Activated CD8-positive, alpha-beta memory T cell treated with anti-CD3 and anti-CD28 coated beads, Interleukin-2, amount 10 ng/mL, durations not matched to agents 7 days and 5 days (primary cell): ENCODE measurements at regions of chr9 and their contacts with region 1.

Region 1: GRCh38 chr9:98848450-98849149 is 41.1 kb downstream of the GALNT12 start:
- DNase-seq: peak; percentile 86
- ATAC-seq: peak; percentile 94
- H3K4me3 Mint-ChIP-seq: no peak overlapping the region
- H3K27ac Mint-ChIP-seq: no peak overlapping the region
- H3K4me1 Mint-ChIP-seq: peaks cover 15% of the 10 kb centered on the region
- H3K27me3 Mint-ChIP-seq: no peaks in the 10 kb centered on the region

Region 2: DNA sequence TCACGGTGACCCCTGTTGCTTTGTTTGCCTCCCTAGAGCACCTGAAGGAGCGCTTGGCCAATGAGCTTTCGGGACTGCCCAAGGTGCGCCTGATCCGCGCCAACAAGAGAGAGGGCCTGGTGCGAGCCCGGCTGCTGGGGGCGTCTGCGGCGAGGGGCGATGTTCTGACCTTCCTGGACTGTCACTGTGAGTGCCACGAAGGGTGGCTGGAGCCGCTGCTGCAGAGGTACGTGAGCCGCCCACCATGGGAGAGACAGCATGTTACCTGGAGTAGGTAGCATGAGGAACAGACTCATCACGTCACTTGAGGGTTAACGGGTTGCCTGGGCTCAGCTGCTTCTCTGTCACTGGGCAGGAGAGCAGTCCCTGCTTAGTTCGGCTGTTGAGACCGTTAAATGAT is 21.9 kb before region 1 on chr9:
- CTCF ChIA-PET with region 1: interaction called, 11 read pairs
- DNase-seq: no peak
- ATAC-seq: no peak
- H3K4me3 Mint-ChIP-seq: no peak overlapping the region
- H3K27ac Mint-ChIP-seq: no peak overlapping the region
- H3K4me1 Mint-ChIP-seq: peaks cover under 1% of the 10 kb centered on the region
- H3K27me3 Mint-ChIP-seq: no peaks in the 10 kb centered on the region

Region 3: DNA sequence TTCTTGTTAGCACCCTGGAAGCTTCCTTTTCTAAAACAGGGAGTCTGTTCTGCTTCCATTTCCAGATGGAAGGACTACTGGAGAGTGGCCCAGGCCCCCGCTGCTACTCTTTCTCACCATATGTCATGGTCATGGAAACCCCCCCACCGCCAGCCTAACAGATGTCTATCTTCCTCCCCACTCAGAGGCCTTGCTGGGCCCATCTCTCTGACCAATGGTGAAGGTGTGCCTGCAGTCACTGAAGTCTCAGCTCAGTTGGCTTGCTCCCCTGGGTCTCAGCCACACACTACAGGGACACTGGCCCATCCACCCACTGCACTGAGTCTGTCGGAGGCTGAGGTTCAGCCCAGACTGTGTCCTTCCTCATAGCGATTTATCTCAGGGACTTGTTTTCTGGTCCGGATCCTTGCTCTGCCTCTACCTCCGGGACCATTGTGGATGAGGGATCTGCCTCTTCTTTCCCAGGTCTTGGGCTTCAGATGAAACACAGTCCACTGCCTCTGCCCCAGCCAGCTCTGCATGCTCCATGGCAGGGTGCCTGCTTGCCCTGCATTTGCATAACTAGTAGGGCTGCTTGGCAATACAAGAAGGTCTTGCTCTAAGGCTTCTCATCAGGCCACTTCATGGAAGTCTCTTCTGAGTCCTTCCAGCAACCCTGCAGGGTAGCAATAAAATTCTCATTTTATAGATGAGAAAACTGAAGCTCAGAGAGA is 10.3 kb before region 1 on chr9:
- CTCF ChIA-PET with region 1: interaction called, 14 read pairs
- DNase-seq: no peak
- ATAC-seq: no peak
- H3K4me3 Mint-ChIP-seq: no peak overlapping the region
- H3K27ac Mint-ChIP-seq: no peak overlapping the region
- H3K4me1 Mint-ChIP-seq: no peaks in the 10 kb centered on the region
- H3K27me3 Mint-ChIP-seq: no peaks in the 10 kb centered on the region

Region 4: DNA sequence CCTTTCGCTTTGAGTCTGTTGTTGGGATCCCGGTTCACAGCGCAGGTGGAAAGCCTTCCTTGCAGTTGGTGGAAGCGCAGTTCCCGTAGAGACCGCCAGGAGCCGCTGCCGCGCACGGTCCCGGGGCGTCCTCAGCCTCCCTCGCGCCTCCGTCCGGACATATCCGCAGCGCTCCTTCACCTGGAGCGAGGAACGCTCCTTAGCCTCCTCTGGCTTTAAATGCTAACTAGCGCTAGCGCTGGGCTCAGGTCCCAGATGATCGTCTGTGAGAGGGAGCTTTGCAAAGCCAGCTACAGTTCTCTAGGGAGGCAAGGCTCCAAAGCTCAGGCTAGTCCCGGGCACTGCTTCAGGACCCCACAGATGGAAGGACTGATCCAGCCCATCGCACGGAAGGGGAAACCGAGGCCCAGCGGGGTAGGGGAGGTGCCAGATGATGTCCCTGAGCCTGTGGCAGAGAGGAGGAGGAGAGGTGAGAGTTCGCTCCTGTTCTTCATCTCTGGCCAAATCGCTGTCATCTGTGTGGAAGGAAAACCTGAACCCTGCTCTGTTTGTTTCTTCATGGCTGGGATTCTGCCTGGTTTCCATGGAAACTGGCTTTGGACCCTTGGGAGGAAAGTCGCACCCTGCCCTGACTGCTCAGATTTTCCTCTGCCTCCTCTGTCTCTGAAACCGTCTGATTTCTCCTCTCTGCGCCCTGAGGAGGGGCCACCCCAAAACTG is 126.6 kb after region 1 on chr9:
- CTCF ChIA-PET with region 1: interaction called, 22 read pairs
- DNase-seq: peak; percentile 86
- ATAC-seq: peak; percentile 94
- H3K4me3 Mint-ChIP-seq: peak overlapping the region; percentile 25
- H3K27ac Mint-ChIP-seq: no peak overlapping the region
- H3K4me1 Mint-ChIP-seq: peaks cover 11% of the 10 kb centered on the region
- H3K27me3 Mint-ChIP-seq: peaks cover 37% of the 10 kb centered on the region

Region 5: GRCh38 chr9:99140685-99141314 is 292.2 kb after region 1 on chr9:
- CTCF ChIA-PET with region 1: interaction called, 13 read pairs
- DNase-seq: peak; percentile 61
- ATAC-seq: peak; percentile 77
- H3K4me3 Mint-ChIP-seq: no peak overlapping the region
- H3K27ac Mint-ChIP-seq: peak overlapping the region; percentile 68
- H3K4me1 Mint-ChIP-seq: peaks cover 32% of the 10 kb centered on the region
- H3K27me3 Mint-ChIP-seq: no peaks in the 10 kb centered on the region